ENCODE measurements at regions of chr11 and their contacts with region 1.

Region 1: GRCh38 chr11:49995565-49995964 is 13.2 kb upstream of the OR4C12 start:
- DNase-seq: no peak
- ATAC-seq: no peak
- H3K4me3 ChIP-seq: no peak overlapping the region
- H3K27ac ChIP-seq: no peak overlapping the region
- H3K4me1 ChIP-seq: no peaks in the 10 kb centered on the region
- H3K27me3 ChIP-seq: no peaks in the 10 kb centered on the region

Region 2: DNA sequence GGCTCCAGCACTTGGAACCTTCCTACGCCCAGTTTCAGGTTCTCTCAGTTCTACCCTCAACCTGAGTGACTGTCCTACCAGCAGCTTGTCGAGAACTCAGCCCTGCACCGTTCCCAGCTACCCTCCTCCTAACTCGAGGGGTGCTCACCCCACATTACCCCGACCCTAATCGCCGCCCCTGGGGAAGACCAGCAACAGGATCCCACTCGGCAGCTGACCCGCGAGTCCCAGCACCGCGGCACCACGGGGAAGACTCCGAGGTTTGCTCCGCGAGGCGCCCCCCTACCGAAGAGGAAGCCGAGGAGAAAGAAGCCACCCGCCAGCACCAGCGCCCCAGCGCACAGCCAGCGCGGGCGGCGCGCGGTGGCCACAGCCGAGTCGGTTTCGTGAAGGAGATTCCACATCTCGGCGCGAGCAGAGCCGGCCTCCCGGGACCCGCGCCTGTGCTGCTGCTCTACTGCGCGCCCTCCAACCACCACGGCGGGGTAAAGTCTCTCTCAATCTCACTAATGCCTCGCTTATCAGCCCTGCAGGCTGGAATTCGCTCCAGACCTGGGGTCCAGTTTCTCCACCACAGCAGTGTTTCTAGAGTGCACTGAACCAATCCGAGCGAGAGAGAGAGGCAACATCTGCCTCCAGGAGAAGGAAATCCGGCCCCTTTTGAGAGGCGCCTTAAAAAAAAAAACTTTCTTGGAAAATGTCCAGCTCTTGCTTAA is 787.4 kb before region 1 on chr11 and contains the start of gene FOLH1:
- intact Hi-C with region 1: loop called in 1 of 2 experiments (anchors 10 kb)
- DNase-seq: peak; percentile 42 to 78
- ATAC-seq: peak; percentile 80
- H3K4me3 ChIP-seq: peak within 1 kb of the TSS in 1 of 2 donors; percentile 11
- H3K27ac ChIP-seq: no peak within 1 kb of the TSS
- H3K4me1 ChIP-seq: no peaks in the 10 kb centered on the region
- H3K27me3 ChIP-seq: no peaks in the 10 kb centered on the region
- total RNA-seq, gene FOLH1: 1.6 to 1.9 TPM

Measured in aorta (tissue), 5 donors.